ENCODE measurements at regions of chr2 and their contacts with region 1.

Region 1: DNA sequence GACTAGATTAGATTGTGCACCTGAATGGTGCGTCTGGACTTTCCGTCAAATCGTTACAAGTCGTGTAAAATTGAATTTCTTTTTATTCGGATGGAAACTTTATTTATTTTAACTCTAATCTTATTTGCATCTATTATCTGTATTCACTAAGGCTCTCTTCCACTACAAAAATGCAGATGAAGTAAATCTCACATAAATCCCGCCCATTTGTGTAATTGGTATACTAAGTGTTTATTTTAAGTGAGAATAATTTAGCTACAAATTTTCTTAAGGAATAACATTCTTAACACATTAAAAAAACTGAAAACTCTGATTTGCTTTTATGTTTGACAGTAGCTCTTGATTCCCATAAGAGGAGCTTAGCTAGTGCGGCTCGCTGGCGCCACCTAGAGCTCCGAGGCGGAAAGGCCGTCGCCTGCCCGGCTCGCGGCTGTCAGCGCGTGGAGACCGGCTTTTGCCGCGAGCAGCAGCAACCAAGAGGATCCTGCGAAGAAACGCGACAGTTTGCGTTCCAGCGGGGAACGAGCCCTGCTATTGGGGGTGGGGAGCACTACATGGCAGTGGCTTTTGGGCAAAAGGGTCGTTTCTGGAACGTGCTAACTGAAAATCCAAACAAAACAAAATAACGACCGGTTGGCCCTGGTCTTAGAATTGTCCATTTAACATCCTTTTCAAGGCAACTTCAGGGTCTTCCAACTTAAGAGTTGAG is 6.7 kb downstream of the SP9 start:
- DNase-seq: peak; percentile 81 to 88 (median 83)
- H3K4me3 ChIP-seq: peak overlapping the region in 1 of 3 experiments; percentile 52
- H3K4me3 Mint-ChIP-seq: peak overlapping the region; percentile 62 to 87
- H3K27ac ChIP-seq: no peak overlapping the region
- H3K27ac Mint-ChIP-seq: peak overlapping the region in 1 of 7 donors; percentile 58
- H3K4me1 ChIP-seq: peaks cover 47 to 57% of the 10 kb centered on the region in 2 donors
- H3K4me1 Mint-ChIP-seq: peaks cover 56% of the 10 kb centered on the region
- H3K27me3 ChIP-seq: peaks cover 89 to 97% of the 10 kb centered on the region in 2 donors
- H3K27me3 Mint-ChIP-seq: peaks cover 83 to 94% (median 90%) of the 10 kb centered on the region in 3 donors
- CTCF ChIP-seq: peak; percentile 99

Region 2: DNA sequence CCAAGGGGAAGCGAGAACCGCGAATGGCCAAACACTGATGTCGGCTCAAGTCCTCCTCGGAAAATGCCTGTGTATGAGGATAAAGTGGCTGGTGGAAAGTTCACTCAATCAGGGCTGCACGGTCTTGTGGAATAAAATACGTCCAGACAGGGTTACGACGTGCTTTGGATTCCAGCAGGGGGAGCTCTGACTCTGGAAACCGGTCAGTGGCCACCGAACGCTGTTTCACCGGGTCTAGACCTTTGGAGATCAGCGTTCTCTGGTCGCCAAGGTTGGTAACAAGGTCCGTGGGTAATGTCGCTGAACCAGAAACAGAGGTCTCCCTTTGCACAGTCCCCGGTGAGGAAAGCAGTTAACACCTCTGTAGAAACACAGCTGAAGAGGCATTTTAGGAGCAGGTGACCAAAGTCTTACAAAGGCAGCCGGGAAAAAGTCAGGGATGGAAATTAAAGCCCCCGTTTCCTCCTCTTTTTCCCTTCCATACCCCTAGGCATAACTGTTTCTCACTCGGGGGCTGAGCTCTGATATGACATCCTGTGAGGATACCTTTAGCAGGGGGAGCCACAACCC is 939.0 kb before region 1 on chr2:
- intact Hi-C with region 1: loop called (anchors 2 kb)
- DNase-seq: peak; percentile 64 to 72 (median 66)
- H3K4me3 ChIP-seq: no peak overlapping the region
- H3K4me3 Mint-ChIP-seq: peak overlapping the region in 1 of 2 donors; percentile 82
- H3K27ac ChIP-seq: no peak overlapping the region
- H3K27ac Mint-ChIP-seq: peak overlapping the region in 2 of 7 donors; percentile 54 to 59
- H3K4me1 ChIP-seq: peaks cover 0 to 2% of the 10 kb centered on the region in 2 donors
- H3K4me1 Mint-ChIP-seq: peaks cover 7% of the 10 kb centered on the region
- H3K27me3 ChIP-seq: peaks cover 56 to 57% of the 10 kb centered on the region in 2 donors
- H3K27me3 Mint-ChIP-seq: peaks cover 57 to 66% (median 60%) of the 10 kb centered on the region in 3 donors
- CTCF ChIP-seq: peak; percentile 71

Region 3: DNA sequence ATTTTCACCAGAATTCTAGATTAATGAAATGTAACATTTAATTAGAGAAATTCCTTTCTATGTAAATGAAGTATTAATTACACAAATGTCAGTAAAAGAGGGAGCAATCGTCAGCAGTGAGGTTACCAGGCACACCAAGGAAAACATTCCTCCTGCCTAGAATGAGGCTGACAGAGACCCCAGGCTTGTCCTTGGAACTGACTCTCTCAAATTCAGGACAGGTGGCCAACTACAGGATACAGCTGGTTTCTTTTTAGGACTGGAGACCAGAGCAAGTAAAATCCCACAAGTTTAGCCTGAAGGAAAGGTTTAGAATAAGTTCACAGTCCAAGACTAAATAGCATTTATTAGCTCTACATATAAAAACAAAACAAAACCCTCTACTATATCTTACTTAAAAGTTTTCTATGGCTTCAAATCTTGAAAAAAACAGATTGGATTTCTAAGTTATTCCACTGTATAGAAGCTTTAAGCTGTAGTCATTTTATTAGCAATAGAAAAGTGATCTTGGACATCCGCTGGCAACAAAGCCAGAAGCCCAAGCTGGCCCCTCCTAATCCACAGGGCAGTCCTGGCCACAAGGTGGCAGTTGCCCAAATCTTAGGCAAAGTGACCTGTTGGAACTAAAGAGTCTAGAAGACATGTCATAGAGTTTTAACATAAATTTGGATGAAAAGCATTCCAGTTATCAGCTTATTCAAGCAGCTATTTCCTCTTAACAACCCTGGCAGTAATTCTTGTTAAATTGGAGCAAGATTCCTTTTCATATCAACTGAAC is 457.2 kb before region 1 on chr2:
- intact Hi-C with region 1: loop called in 1 of 2 experiments (anchors 10 kb)
- DNase-seq: peak; percentile 34 to 55 (median 48)
- H3K4me3 ChIP-seq: no peak overlapping the region
- H3K4me3 Mint-ChIP-seq: peak overlapping the region in 1 of 2 donors; percentile 59
- H3K27ac ChIP-seq: no peak overlapping the region
- H3K27ac Mint-ChIP-seq: no peak overlapping the region
- H3K4me1 ChIP-seq: peaks cover 11% of the 10 kb centered on the region in 2 donors
- H3K4me1 Mint-ChIP-seq: peaks cover 24% of the 10 kb centered on the region
- H3K27me3 ChIP-seq: no peaks in the 10 kb centered on the region
- H3K27me3 Mint-ChIP-seq: peaks cover 0 to 2% (median 0%) of the 10 kb centered on the region in 3 donors
- CTCF ChIP-seq: peak; percentile 71

Region 4: GRCh38 chr2:174158003-174158402 is 183.4 kb before region 1 on chr2:
- intact Hi-C with region 1: loop called (anchors 5 kb)
- DNase-seq: peak in 2 of 3 donors; percentile 10 to 27
- H3K4me3 ChIP-seq: no peak overlapping the region
- H3K4me3 Mint-ChIP-seq: no peak overlapping the region
- H3K27ac ChIP-seq: no peak overlapping the region
- H3K27ac Mint-ChIP-seq: no peak overlapping the region
- H3K4me1 ChIP-seq: peaks cover 0 to 3% of the 10 kb centered on the region in 2 donors
- H3K4me1 Mint-ChIP-seq: peaks cover 3% of the 10 kb centered on the region
- H3K27me3 ChIP-seq: no peaks in the 10 kb centered on the region
- H3K27me3 Mint-ChIP-seq: no peaks in the 10 kb centered on the region
- CTCF ChIP-seq: peak; percentile 56